Activated naive CD4-positive, alpha-beta T cell treated with anti-CD3 and anti-CD28 coated beads, Interleukin-2, amount 10 ng/mL, durations not matched to agents 7 days and 5 days (primary cell): ENCODE measurements at regions of chr5 and their contacts with region 1.

Region 1: DNA sequence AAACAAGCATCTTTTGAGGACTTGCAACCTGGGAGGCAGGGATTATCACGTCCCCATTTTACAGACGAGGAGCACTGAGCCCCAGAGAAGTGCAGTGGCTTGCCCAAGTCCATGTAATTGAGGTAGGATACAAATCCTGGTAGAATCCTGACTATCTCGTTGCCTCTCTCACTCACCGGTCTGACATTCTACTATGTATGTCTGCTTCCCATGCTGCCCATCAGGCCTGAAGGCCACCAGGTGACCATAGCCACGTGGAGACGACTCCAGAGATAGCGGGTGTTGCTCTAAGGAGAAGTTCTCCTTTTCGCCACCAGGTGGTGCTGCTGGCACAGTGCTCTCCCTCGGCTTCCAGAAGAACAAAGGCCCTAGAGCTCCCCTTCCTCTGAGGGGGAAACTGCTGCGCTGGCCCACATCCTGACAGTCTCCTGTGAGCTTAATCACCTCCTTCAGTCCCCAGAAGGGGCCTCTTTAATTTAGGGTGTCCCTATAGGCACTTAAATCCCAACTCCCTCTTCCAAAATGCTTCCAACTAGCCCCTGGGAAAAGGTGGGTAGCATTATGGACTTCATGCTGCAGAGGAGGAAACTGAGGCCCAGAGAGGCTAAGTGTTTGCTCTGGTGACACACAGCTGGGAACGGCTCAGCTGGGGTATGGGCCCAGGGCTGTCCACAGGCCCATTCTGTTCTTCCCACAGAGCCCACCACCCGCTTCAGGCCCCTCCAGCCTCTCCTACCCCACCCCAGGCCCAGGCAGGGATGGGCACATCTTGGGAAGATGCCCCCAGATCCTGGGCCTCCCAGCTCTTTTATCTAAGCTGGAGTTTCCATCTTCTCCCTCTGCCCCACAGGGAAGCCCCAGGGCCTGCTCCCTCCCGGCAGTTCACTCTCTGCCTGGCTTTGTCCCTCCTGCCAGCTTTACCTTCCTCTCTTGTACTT is 6.4 kb downstream of the SLC34A1 start:
- DNase-seq: peak; percentile 93
- H3K4me3 Mint-ChIP-seq: peak overlapping the region; percentile 8
- H3K27ac Mint-ChIP-seq: peak overlapping the region; percentile 92
- H3K4me1 Mint-ChIP-seq: peaks cover 42% of the 10 kb centered on the region
- H3K27me3 Mint-ChIP-seq: peaks cover 56% of the 10 kb centered on the region

Region 2: GRCh38 chr5:177311723-177312648 is 78.6 kb before region 1 on chr5 and contains the start of gene MXD3:
- CTCF ChIA-PET with region 1: interaction called, 22 read pairs
- DNase-seq: peak; percentile 99
- H3K4me3 Mint-ChIP-seq: peak within 1 kb of the TSS; percentile 100
- H3K27ac Mint-ChIP-seq: peak within 1 kb of the TSS; percentile 94
- H3K4me1 Mint-ChIP-seq: peaks cover 57% of the 10 kb centered on the region
- H3K27me3 Mint-ChIP-seq: no peaks in the 10 kb centered on the region

Region 3: GRCh38 chr5:177357459-177358351 is 32.9 kb before region 1 on chr5 and contains the start of gene RGS14:
- CTCF ChIA-PET with region 1: interaction called, 14 read pairs
- DNase-seq: peak; percentile 82
- H3K4me3 Mint-ChIP-seq: peak within 1 kb of the TSS; percentile 93
- H3K27ac Mint-ChIP-seq: peak within 1 kb of the TSS; percentile 75
- H3K4me1 Mint-ChIP-seq: peaks cover 83% of the 10 kb centered on the region
- H3K27me3 Mint-ChIP-seq: no peaks in the 10 kb centered on the region

Region 4: DNA sequence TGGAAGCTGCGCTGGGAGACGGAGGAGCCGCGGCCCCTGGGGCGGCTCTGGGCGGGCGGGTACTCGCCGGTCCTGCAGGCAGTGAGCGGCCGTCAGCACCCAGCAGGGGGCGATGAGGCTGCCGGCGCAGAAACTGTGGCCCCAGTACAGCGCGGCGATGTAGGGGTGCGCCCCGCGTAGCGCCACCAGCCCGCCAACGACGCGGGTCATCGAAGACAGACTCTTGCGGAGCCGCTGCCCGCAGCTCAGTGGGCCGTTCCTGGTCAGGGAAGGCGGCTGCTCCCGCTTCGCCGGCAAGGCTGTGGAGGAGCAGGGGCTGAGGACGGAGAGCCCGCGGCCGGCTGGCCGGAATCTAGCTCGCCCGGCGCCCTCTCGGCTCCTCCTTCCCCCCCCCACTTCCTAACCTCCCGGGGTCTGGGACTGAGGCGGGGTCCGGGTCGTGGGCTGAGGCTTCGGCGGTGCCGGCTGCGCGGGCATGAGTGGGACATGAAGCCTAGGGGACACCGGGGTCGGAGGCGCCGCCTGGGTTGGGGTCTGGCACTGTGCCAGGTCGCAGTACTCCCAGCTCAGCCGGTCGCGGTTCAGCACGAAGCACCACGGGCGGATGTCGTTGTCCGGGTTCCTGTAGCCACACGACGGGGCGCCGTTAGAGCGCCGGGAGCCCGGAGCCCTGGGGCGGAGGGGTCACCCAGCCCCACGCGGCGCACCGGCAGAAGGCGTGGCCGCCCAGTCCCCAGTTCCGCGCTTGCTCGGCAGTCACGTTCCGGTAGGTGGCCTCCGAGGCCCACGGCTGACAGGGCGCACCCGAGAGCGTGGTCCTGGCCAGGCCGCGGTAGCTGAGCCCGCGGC is 13.4 kb after region 1 on chr5:
- CTCF ChIA-PET with region 1: interaction called, 177 read pairs
- DNase-seq: peak; percentile 90
- H3K4me3 Mint-ChIP-seq: peak overlapping the region; percentile 71
- H3K27ac Mint-ChIP-seq: no peak overlapping the region
- H3K4me1 Mint-ChIP-seq: peaks cover 38% of the 10 kb centered on the region
- H3K27me3 Mint-ChIP-seq: peaks cover 95% of the 10 kb centered on the region

Region 5: DNA sequence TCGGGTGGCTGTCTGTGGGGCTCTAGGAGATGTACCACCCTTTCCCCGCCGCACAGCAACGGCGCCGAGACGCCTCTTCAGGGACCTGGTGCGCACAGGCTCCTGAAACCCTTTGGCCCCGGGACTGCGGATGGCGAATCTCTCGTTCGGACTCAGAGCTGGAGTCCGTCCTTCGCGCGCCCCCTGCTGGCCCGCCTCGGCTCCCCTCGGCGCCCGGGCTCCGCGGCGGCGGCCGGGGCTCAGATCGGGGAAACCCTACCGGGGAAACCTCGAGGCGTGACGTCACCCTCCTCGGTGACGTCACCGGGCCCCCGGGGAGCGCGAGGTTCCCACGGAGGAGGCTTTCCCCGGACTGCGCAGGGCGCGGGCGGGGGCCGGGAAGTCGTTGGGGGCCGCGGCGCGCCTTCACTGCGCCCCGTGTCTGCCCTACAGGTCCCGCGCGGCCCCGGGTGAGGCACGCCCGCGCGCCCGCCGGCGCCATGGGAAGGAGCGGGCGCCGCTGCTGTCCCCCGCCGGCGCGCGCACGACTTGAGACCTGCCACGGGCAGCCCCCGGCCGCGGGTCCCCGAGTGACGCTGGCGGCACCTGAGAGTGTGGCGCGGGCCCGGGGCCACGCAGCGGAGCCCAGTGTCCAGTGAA is 63.9 kb after region 1 on chr5:
- CTCF ChIA-PET with region 1: interaction called, 119 read pairs
- DNase-seq: peak; percentile 92
- H3K4me3 Mint-ChIP-seq: peak overlapping the region; percentile 80
- H3K27ac Mint-ChIP-seq: peak overlapping the region; percentile 84
- H3K4me1 Mint-ChIP-seq: peaks cover 29% of the 10 kb centered on the region
- H3K27me3 Mint-ChIP-seq: peaks cover 44% of the 10 kb centered on the region

Region 6: DNA sequence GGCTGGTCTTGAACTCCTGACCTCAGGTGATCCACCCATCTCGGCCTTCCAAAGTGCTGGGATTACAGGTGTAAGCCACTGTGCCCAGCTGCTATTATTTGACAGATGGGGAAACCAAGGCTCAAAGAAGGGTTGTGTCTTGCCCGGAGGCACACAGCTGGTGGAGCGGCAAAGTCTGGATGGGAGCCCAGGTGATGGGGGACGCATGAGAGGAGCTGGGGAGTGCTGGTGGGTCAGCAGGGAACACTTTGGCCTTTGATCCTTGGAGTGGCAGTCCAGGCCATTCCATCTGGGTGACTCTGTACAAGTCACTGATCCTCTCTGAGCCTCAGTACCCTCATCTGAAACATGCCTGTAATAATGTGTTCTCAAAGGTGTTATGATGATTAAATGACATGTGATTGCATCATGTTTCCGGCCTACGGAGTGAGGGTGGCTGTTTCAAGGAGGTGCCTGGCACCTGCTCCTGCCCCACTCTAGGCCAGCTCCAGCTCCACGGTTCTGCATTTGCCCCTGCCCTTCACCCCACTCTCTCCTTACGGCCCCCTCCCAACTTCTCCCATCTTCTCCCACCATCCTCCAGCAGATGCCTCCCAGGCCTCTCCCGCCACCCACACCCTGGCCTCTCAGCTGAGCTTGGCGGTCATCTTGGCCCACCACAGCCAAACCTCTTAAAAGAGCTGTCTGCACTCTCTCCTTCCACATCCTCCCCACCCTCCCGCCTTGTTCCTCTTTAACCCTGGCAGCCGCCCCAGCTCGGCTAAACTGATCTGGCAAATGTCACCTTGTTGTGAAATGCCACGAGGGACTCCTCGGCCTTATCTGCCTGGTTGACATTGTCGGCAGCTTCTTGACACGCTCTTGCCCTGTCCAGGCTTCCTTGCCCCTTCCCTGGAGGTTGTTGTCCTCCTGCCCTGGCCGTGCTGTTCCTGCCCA is 88.3 kb after region 1 on chr5:
- CTCF ChIA-PET with region 1: interaction called, 10 read pairs
- DNase-seq: peak; percentile 49
- H3K4me3 Mint-ChIP-seq: no peak overlapping the region
- H3K27ac Mint-ChIP-seq: peak overlapping the region; percentile 88
- H3K4me1 Mint-ChIP-seq: peaks cover 45% of the 10 kb centered on the region
- H3K27me3 Mint-ChIP-seq: peaks cover 23% of the 10 kb centered on the region